Activated B cell treated with CpG ODN at 0.5 μM for 24 hours (primary cell): ENCODE measurements at regions of chr9 and their contacts with region 1.

Region 1: GRCh38 chr9:129783516-129784361 is 19.2 kb upstream of the TOR1B start:
- DNase-seq: peak; percentile 46
- ATAC-seq: peak; percentile 98
- H3K4me3 Mint-ChIP-seq: no peak overlapping the region
- H3K27ac Mint-ChIP-seq: no peak overlapping the region
- H3K4me1 Mint-ChIP-seq: peaks cover 3% of the 10 kb centered on the region
- H3K27me3 Mint-ChIP-seq: peaks cover 15% of the 10 kb centered on the region
- CTCF ChIP-seq: peak; percentile 74

Region 2: DNA sequence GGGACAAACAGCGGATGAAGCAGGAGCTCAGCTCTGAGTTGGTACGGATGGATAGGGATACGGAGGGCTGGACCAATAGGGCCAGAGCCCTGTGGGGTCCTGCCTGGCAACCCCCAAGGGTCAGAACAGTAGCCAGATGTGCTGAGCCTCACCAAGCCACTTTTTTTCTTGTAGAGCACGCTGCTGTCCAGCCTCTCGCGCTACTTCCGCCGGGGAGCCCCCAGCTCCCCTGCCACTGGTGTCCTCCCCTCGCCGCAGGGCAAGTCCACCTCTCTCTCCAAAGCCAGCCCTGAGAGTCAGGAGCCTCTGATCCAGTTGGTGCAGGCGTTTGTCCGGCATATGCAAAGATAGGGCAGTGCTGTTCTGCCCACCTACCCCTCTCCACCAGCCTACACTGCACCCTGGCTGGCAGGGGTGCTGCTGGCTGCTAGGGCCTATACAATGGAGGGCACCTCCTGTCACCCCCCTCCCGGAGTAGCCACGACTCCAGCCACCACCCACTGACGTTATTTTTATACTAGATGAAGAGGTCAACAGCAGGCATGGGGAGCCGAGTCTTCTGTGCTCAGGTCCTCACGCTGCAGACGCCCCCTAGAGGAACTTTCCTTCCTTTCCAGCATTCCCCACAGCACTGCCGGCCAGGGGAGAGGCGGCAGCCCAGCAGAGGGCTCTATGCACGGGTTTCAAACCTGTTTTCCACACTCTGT is 777.3 kb before region 1 on chr9:
- CTCF ChIA-PET with region 1: no interaction called
- POLR2A ChIA-PET with region 1: no interaction called
- intact Hi-C with region 1: loop called (anchors 5 kb)
- DNase-seq: no peak
- ATAC-seq: peak; percentile 82
- H3K4me3 Mint-ChIP-seq: no peak overlapping the region
- H3K27ac Mint-ChIP-seq: no peak overlapping the region
- H3K4me1 Mint-ChIP-seq: peaks cover 6% of the 10 kb centered on the region
- H3K27me3 Mint-ChIP-seq: no peaks in the 10 kb centered on the region
- CTCF ChIP-seq: peak; percentile 29

Region 3: DNA sequence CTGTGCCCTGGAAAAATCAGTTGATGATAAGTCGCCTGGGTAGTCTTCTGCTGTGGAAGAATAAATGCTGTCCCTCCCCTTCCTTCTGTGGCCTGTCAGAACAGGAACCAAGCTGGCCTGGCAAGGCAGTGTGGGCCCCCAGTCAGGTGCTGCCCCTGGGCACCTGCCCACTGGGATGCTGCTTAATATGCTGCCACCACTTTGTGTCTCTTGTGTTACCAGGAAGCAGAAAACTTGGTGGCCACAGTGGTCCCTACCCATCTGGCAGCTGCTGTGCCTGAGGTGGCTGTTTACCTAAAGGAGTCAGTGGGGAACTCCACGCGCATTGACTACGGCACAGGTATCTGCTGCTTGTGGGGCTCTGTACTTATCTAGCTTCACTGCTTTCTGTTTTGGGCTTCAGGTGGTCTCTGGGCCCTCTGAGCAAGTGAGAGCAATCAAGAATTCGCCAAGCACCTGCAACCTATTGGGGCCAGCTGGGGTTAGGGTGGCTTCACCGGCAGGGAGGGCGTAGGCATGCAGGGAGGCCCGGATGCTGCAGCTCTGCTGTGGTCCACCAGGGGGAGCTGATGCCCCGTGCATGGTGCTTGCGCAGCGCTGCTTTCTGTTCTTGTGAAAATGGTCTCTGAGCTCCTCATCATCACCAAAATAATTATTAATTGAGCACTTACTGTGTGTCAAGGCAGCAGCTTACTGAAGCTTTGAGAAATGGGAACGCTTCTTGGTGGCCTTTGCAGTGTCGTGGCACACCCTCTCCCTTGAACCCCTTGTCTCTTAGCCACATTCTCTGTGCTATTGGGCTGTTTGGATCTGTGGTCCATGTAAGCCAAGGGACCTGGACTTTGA is 652.2 kb before region 1 on chr9:
- CTCF ChIA-PET with region 1: interaction called, 18 read pairs
- POLR2A ChIA-PET with region 1: interaction called, 4 read pairs
- intact Hi-C with region 1: loop called (anchors 1 kb)
- DNase-seq: peak; percentile 77
- ATAC-seq: peak; percentile 100
- H3K4me3 Mint-ChIP-seq: no peak overlapping the region
- H3K27ac Mint-ChIP-seq: no peak overlapping the region
- H3K4me1 Mint-ChIP-seq: peaks cover 10% of the 10 kb centered on the region
- H3K27me3 Mint-ChIP-seq: no peaks in the 10 kb centered on the region
- CTCF ChIP-seq: peak; percentile 83

Region 4: DNA sequence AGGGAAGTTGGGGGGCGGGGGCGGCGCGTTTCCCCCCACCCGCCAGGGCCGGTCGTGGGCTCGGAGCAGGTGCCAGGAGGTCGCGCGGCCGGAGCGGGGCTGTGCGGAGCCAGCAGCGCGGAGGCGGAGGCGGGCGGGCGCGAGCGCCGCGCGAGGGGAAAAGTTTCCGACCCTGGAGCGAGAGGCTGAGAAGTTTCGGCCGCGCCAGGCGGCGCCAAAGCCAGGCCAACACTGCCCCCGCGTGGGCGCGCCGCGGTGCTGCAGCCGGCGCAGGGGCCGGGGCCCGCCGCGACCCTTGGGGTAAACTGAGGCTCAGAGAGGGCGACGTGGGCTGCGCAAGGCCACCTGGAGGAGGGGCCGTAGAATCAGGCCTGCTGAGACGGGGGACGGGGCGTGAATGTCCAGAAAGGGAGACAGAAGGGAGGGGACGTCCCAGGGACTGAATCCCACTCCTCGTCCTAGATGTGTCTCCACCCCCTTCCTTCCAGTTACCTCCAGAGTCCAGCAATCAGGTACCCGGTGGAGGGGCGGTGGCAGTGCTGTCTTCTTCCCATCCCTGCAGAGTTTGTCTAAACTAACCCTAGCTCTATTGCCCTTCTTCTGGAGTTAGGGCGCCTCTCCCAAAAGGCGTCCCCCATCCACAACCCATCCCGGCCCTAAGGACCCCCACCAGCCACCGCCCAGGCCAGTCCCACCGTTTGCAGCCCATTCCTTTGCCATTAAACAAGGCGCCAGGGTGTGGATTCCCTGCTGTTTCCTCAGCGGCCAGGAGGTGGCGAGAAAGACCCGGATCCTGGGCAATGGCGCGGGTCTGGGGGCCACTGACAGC is 173.1 kb before region 1 on chr9:
- CTCF ChIA-PET with region 1: interaction called, 6 read pairs
- POLR2A ChIA-PET with region 1: interaction called, 7 read pairs
- intact Hi-C with region 1: loop called (anchors 1 kb)
- DNase-seq: peak; percentile 75
- ATAC-seq: peak; percentile 82
- H3K4me3 Mint-ChIP-seq: peak overlapping the region; percentile 81
- H3K27ac Mint-ChIP-seq: peak overlapping the region; percentile 41
- H3K4me1 Mint-ChIP-seq: peaks cover 24% of the 10 kb centered on the region
- H3K27me3 Mint-ChIP-seq: peaks cover 2% of the 10 kb centered on the region
- CTCF ChIP-seq: peak; percentile 37

Region 5: GRCh38 chr9:129737479-129738274 is 46.1 kb before region 1 on chr9:
- CTCF ChIA-PET with region 1: interaction called, 11 read pairs
- POLR2A ChIA-PET with region 1: no interaction called
- intact Hi-C with region 1: loop called (anchors 1 kb)
- DNase-seq: peak; percentile 81
- ATAC-seq: peak; percentile 91
- H3K4me3 Mint-ChIP-seq: peak overlapping the region; percentile 70
- H3K27ac Mint-ChIP-seq: no peak overlapping the region
- H3K4me1 Mint-ChIP-seq: peaks cover 10% of the 10 kb centered on the region
- H3K27me3 Mint-ChIP-seq: peaks cover 6% of the 10 kb centered on the region
- CTCF ChIP-seq: peak; percentile 82